HepG2 (cell line): ENCODE measurements at regions of chr15 and their contacts with region 1.

Region 1: DNA sequence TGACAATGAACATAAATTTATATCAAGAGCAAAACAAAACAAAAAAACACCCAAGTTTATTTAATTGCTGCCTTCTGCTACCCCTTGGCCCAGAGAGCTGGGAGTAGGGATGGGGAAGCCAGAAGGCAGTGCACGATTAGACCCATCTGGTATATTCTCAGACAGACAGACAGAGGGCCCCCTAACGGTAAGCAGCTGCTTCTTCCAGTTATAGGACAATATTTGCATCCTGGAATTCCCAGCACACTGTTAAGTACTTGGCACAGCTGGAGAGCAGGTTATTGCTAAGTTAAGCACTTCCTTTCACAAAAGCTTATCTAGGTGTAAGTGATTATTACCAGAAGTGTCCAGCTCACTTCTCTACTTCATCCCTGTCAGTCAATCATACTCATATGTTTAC is 39.3 kb downstream of the C2CD4B start:
- DNase-seq: peak; percentile 44
- ATAC-seq: peak; percentile 87
- H3K4me3 ChIP-seq: no peak overlapping the region
- H3K27ac ChIP-seq: no peak overlapping the region
- H3K4me1 ChIP-seq: peaks cover 17% of the 10 kb centered on the region
- H3K27me3 ChIP-seq: no peaks in the 10 kb centered on the region; a peak in 1 of 5 replicates
- CTCF ChIP-seq: peak; percentile 61
- EP300 ChIP-seq: no peak
- POLR2A ChIP-seq: no peak
- RAD21 ChIP-seq: 0 out of 2 replicates have a peak, but pooled peaks have one; percentile 10

Region 2: GRCh38 chr15:61715082-61715481 is 410.7 kb before region 1 on chr15:
- CTCF ChIA-PET with region 1: no interaction called
- POLR2A ChIA-PET with region 1: no interaction called
- in situ Hi-C with region 1: no loop called
- intact Hi-C with region 1: no loop called
- DNase-seq: no peak
- ATAC-seq: no peak
- H3K4me3 ChIP-seq: no peak overlapping the region
- H3K27ac ChIP-seq: no peak overlapping the region
- H3K4me1 ChIP-seq: no peaks in the 10 kb centered on the region
- H3K27me3 ChIP-seq: no peaks in the 10 kb centered on the region
- CTCF ChIP-seq: no peak
- EP300 ChIP-seq: no peak
- POLR2A ChIP-seq: no peak
- RAD21 ChIP-seq: no peak

Region 3: GRCh38 chr15:62254137-62254934 is 128.6 kb after region 1 on chr15:
- CTCF ChIA-PET with region 1: no interaction called
- POLR2A ChIA-PET with region 1: no interaction called
- in situ Hi-C with region 1: no loop called
- intact Hi-C with region 1: loop called (anchors 1 kb)
- DNase-seq: peak; percentile 59
- ATAC-seq: peak; percentile 86
- H3K4me3 ChIP-seq: no peak overlapping the region
- H3K27ac ChIP-seq: no peak overlapping the region
- H3K4me1 ChIP-seq: peaks cover 54% of the 10 kb centered on the region
- H3K27me3 ChIP-seq: peaks cover 2 to 9% of the 10 kb centered on the region in 2 experiments; a peak in 2 of 5 replicates
- CTCF ChIP-seq: peak; percentile 76
- EP300 ChIP-seq: no peak
- POLR2A ChIP-seq: no peak
- RAD21 ChIP-seq: peak; percentile 53; the same call in 1 of the 2 replicates